MCF 10A (cell line): ENCODE measurements at regions of chr2 and their contacts with region 1.

Region 1: DNA sequence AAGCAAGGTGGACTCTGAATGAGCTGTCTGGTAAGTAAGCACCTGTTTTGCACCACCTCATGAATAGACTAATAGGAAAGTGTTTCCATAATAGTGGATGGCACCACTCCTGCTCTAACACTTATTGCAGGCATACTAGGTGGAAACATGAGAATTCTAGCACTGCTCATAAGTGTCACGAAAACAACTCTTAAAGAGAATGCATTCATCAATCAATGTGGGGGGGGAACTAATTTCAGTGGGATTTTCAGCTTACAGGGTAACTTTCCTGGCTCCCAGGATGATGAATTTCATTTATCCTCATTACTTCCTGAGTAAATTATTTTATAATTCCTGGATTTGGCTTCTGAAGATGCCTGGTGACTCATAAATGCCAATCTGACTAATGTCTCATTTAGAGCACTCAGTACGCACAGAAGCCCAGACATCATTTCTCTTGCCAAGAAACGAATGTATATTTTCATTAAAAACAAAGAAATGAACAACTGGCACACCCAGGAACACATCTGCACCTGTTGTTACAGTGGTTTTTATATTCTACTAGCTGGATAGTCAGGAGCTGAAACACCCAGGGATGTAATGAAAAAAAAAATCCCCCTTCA is 129.6 kb downstream of the PID1 start:
- DNase-seq: peak; percentile 86
- H3K4me3 Mint-ChIP-seq: no peak overlapping the region
- H3K27ac Mint-ChIP-seq: peak overlapping the region; percentile 49
- H3K4me1 Mint-ChIP-seq: peaks cover 30% of the 10 kb centered on the region
- H3K27me3 Mint-ChIP-seq: no peaks in the 10 kb centered on the region
- CTCF ChIP-seq: no peak

Region 2: DNA sequence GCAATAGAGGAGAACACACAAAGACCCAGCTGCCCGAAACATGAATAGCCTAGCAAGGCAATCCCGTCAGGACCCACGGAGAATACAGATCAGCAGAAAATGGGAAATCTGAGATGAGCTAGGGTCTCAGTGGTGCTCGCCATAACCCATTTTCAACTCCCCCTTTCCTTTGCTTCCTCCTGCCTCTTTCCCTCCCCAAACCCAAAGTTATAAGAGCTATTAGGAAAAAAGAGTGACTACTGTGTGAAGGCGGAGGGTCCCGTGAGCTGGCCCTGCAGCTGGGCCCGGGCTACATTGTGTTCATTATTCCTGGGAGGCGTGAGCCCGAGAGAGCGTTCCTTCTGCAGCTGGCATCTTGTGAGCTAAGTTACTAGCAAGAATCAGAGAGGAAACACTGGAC is 11.2 kb after region 1 on chr2:
- CTCF ChIA-PET with region 1: no interaction called
- POLR2A ChIA-PET with region 1: interaction called, 11 read pairs
- intact Hi-C with region 1: no loop called
- DNase-seq: no peak
- H3K4me3 Mint-ChIP-seq: no peak overlapping the region
- H3K27ac Mint-ChIP-seq: no peak overlapping the region
- H3K4me1 Mint-ChIP-seq: peaks cover 10% of the 10 kb centered on the region
- H3K27me3 Mint-ChIP-seq: no peaks in the 10 kb centered on the region
- CTCF ChIP-seq: no peak

Region 3: DNA sequence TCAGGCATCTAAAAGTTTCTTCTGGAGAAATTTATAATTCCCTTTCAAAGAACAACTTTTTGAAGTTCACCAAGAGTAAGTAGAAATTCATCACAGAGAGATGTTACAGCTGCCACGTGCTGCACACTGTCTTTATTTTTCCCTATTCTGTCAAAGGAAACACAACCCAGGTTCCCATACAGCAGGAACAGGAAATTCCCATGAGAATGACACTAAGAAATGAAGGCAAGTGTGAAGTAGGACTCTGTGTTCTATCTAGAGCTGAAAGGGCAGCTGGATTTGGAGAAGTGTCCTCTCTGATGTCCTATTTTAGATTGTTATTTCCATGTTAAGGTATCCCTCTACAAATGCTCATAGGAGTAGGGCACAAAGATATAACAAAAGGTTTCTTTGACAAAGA is 70.7 kb after region 1 on chr2:
- CTCF ChIA-PET with region 1: no interaction called
- POLR2A ChIA-PET with region 1: no interaction called
- intact Hi-C with region 1: no loop called
- DNase-seq: no peak
- H3K4me3 Mint-ChIP-seq: no peak overlapping the region
- H3K27ac Mint-ChIP-seq: peak overlapping the region; percentile 39
- H3K4me1 Mint-ChIP-seq: peaks cover 9% of the 10 kb centered on the region
- H3K27me3 Mint-ChIP-seq: no peaks in the 10 kb centered on the region
- CTCF ChIP-seq: no peak